Activated CD8-positive, alpha-beta memory T cell treated with anti-CD3 and anti-CD28 coated beads, Interleukin-2, amount 10 ng/mL, durations not matched to agents 7 days and 5 days (primary cell): ENCODE measurements at regions of chr16 and their contacts with region 1.

Region 1: DNA sequence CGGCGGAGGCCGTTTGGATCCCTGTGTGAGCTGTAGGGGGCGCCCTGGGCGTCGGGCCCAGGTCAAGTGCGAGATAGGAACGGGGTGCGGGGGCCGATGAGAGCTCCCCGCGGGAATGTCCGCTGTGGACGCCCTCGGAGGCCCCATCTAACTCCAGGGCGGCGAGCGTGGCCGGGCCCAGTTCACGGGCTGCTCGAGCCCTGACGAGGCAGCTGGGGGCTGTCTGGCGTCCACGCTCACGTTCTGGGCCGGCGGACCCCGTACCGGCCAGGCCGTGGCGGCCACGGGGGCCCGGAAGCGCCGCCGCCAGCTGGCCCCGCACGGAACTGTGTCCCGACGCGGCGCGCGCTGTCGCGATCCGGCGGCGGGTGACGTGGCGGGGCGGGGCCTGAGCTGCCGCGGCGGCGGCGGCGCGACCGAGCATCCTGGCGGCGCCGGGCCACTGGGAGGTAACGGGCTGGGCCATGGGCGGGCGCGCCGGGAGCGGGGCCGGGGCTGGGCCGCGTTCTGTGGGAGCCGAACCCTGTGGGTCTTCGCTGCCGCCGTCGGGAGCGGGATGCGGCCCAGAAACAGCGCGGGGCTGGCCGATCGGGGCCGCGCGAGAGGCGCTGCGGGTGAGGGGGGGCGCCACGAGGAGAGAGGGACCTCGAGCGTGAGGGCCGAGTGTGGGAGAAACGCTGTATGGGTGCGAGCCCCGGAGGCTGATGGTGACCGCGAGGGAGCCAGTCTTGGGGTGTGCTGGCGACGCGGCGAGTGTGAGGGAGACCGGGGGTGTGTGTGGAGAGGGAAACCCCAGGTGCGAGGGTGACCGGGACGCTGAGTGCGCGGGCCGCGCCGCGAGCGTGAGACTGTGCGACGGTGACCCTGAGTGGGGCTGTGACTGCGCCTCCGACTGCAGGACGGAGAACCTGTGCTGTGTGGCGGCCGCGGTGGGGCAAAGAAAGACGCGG is at the start of gene SLC7A6:
- DNase-seq: peak; percentile 87
- ATAC-seq: peak; percentile 84
- H3K4me3 Mint-ChIP-seq: peak within 1 kb of the TSS; percentile 94
- H3K27ac Mint-ChIP-seq: peak within 1 kb of the TSS; percentile 98
- H3K4me1 Mint-ChIP-seq: peaks cover 53% of the 10 kb centered on the region
- H3K27me3 Mint-ChIP-seq: no peaks in the 10 kb centered on the region
- total RNA-seq, gene SLC7A6: 73.3 to 99.5 TPM

Region 2: GRCh38 chr16:68064791-68065365 is 199.5 kb before region 1 on chr16:
- CTCF ChIA-PET with region 1: no interaction called
- DNase-seq: peak; percentile 88
- ATAC-seq: peak; percentile 76
- H3K4me3 Mint-ChIP-seq: no peak overlapping the region
- H3K27ac Mint-ChIP-seq: peak overlapping the region; percentile 88
- H3K4me1 Mint-ChIP-seq: peaks cover 81% of the 10 kb centered on the region
- H3K27me3 Mint-ChIP-seq: no peaks in the 10 kb centered on the region

Region 3: DNA sequence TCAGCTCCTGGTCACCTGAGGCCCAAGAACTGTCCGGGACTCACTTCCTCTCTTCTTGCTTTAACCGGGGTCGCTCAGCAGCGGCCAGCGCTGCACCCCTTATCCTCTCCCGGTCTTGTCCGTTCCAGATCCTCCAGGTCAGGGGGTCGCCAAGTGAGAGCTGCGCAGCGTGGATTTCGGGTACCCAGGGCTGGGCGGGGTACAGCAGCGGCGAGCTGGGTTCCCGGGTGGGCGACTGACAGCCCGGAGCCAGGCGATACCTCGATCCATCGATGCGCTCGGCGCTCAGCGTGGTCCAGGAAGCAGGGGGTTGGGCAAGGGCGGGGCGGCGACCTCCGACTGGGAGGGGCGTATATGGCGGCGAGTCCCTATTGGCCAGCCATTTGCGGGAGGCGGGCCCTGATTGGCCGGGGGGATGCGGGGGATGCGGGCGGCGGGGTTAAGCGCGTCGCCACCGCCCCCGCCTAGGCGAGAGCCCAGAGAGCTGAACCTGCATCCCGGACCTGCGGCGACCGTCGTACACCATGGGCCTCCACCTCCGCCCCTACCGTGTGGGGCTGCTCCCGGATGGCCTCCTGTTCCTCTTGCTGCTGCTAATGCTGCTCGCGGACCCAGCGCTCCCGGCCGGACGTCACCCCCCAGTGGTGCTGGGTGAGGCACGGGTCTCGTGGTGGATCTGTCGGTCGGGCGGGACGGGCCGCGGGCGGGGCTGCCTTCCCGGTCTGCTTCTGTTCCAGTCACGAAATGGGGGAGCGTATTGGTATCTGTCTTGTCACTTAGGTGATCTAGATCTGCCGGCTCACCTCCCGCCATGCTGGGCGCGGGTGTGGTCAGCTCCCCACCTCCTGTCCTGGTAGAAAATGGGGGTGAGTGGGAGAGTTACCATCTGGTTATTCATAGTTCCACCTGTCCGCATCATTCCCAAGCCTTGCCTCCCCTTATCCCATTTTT is 19.2 kb before region 1 on chr16 and contains the start of gene PLA2G15:
- CTCF ChIA-PET with region 1: interaction called, 56 read pairs
- DNase-seq: peak; percentile 97
- ATAC-seq: peak; percentile 97
- H3K4me3 Mint-ChIP-seq: peak within 1 kb of the TSS; percentile 96
- H3K27ac Mint-ChIP-seq: peak within 1 kb of the TSS; percentile 85
- H3K4me1 Mint-ChIP-seq: peaks cover 21% of the 10 kb centered on the region
- H3K27me3 Mint-ChIP-seq: no peaks in the 10 kb centered on the region
- total RNA-seq, gene PLA2G15: 8.4 to 9.3 TPM

Region 4: DNA sequence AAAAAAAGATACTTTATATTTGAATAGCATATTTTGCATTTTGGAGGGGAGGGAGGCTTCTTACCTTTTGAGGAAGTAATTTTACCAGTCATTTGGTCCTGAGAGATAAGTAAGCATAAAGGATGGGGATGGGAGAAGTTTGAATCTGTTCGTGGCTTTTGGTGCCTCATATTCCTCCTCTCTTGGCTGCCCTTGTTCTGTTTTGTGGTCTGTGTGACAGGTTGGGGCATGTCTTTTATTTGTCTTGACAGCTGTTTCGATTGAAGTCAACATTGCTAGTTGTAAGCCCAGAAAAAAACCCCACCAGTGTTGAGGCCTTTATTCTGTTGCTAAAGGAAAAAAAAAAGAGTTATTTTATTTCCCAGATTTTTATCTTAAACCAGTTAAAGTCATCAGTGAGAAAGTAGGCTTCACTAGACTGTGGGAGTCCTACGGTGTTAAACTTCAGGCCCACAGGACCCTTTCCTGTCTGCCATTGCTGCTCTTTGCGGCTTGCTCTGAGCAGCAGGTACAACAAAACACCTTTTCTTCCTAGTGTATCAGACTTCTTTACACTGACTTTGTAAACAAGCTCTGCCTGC is 11.3 kb after region 1 on chr16:
- CTCF ChIA-PET with region 1: interaction called, 42 read pairs
- DNase-seq: peak; percentile 65
- ATAC-seq: peak; percentile 75
- H3K4me3 Mint-ChIP-seq: peak overlapping the region; percentile 37
- H3K27ac Mint-ChIP-seq: peak overlapping the region; percentile 90
- H3K4me1 Mint-ChIP-seq: peaks cover 60% of the 10 kb centered on the region
- H3K27me3 Mint-ChIP-seq: no peaks in the 10 kb centered on the region

Region 5: GRCh38 chr16:68298907-68299561 is 34.6 kb after region 1 on chr16:
- CTCF ChIA-PET with region 1: interaction called, 44 read pairs
- DNase-seq: no peak
- ATAC-seq: no peak
- H3K4me3 Mint-ChIP-seq: no peak overlapping the region
- H3K27ac Mint-ChIP-seq: peak overlapping the region; percentile 25
- H3K4me1 Mint-ChIP-seq: peaks cover 2% of the 10 kb centered on the region
- H3K27me3 Mint-ChIP-seq: no peaks in the 10 kb centered on the region

Region 6: DNA sequence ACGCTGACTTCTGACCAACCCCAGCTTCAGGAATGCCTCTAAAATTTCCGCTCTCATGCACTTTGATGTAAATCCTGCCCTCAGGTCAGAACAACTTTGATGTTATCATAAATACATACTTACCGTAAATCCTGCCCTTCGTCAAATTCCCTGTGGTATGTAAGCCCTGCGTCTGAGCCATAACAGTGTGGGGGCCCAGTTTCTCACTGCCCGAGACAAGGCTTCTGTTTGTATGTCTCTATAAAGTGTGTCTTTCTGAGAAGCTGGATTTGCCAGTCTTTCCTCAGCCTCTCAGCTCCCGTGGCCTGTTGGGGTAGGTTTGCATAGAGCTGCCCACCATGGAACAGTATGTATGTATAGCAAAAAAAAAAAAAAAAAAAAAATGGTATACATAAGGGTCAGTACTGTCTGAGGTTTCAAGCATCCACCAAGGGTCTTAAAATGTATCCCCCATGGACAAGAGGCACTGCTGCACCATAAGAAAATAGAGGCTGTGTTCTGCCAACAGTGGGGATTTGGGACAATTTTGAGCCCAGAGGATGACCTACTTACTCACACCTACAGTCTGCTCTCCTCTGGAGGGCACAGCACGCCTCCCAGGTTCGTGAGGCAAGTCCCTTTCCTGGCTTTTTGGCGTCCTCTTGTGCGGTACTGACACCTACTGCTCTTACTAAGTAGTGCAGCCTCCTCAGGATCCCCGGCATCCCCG is 63.9 kb after region 1 on chr16:
- CTCF ChIA-PET with region 1: interaction called, 451 read pairs
- DNase-seq: peak; percentile 86
- ATAC-seq: peak; percentile 97
- H3K4me3 Mint-ChIP-seq: no peak overlapping the region
- H3K27ac Mint-ChIP-seq: no peak overlapping the region
- H3K4me1 Mint-ChIP-seq: peaks cover 26% of the 10 kb centered on the region
- H3K27me3 Mint-ChIP-seq: no peaks in the 10 kb centered on the region

Region 7: DNA sequence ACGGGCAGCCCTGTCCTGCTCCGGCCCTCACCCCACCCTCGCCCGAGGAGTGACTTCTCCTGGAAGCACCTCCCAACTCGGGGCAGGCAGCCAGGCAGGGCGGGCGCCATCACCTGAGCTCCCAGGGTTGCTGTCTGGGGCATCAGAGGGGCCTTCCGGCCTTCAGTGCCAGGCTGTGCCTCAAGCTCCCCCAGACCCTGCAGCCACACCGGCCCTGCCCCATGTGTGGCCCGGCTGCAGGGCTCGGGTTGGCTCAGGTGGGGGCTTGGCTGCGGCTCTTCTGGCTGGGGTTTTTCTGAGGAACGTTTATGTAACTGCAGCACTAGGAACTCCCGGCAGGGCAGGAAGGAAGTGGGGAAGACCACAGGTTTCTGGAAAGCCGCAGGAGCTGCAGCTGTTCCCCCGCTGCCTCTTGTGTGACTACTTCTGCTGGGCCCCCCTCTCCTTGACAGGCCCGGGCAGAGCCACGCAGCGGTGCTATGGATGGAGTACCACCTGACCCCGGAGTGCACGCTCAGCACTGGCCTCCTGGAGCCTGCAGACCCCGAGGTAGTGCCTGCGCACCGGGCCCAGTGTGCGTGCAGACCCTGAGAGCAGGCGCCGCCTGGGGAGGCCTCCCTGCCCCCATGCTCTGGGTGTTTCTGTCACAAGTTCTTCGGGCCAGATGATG is 92.0 kb after region 1 on chr16:
- CTCF ChIA-PET with region 1: interaction called, 15 read pairs
- DNase-seq: peak; percentile 95
- ATAC-seq: peak; percentile 84
- H3K4me3 Mint-ChIP-seq: peak overlapping the region; percentile 32
- H3K27ac Mint-ChIP-seq: peak overlapping the region; percentile 69
- H3K4me1 Mint-ChIP-seq: peaks cover 37% of the 10 kb centered on the region
- H3K27me3 Mint-ChIP-seq: no peaks in the 10 kb centered on the region

Region 8: DNA sequence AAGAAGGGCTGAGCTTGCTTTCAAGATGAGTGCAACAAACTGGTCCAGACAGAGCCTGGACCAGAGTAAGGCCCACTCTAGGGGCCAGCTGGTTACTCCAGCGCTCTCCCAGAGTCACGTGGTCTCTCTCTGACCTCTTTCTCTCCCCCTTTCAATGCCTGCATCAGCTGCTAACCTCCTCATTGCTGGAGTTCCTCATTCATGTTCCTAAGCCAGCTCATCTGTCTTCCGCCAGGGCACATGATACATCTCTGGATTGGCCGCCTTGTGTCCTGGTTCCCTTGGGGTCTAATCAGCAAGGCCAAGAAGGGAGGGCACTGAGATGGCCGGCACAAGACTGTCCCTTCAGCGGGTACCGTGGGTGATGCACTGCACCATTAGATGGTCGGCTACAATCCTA is 247.8 kb after region 1 on chr16:
- CTCF ChIA-PET with region 1: interaction called, 11 read pairs
- DNase-seq: no peak
- ATAC-seq: no peak
- H3K4me3 Mint-ChIP-seq: no peak overlapping the region
- H3K27ac Mint-ChIP-seq: no peak overlapping the region
- H3K4me1 Mint-ChIP-seq: peaks cover 10% of the 10 kb centered on the region
- H3K27me3 Mint-ChIP-seq: peaks cover 19% of the 10 kb centered on the region